Activated CD8-positive, alpha-beta memory T cell treated with anti-CD3 and anti-CD28 coated beads, Interleukin-2, amount 10 ng/mL, durations not matched to agents 7 days and 5 days (primary cell): ENCODE measurements at regions of chr2 and their contacts with region 1.

Region 1: GRCh38 chr2:216114714-216115557 is 5.8 kb downstream of the XRCC5 start:
- DNase-seq: peak; percentile 99
- ATAC-seq: peak; percentile 91
- H3K4me3 Mint-ChIP-seq: peak overlapping the region; percentile 79
- H3K27ac Mint-ChIP-seq: peak overlapping the region; percentile 82
- H3K4me1 Mint-ChIP-seq: peaks cover 90% of the 10 kb centered on the region
- H3K27me3 Mint-ChIP-seq: no peaks in the 10 kb centered on the region

Region 2: DNA sequence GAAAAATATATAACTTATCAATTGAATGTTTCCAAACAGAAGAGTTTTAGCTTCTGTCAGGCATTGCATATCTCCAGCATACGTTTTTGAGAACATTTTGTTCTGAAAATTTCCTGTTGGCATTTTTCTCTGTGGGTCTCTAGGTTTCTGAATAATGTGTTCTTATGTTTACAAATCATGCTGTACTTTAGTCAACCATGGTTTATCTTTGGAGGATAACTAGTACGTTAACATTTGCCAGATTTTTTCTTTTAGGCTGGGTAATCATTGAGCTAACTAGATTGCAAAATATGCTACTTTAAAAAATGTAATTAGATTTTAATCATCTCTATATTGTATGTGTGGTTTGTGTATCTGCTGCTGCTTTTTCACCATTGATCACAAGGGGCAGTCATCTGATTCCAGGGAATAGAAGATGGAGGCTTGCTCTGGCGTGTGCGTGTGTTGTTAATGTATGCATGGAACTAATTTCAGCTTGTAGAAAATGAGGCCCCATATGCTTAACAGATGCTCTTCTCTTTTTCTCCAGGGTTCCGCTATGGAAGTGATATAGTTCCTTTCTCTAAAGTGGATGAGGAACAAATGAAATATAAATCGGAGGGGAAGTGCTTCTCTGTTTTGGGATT is 15.5 kb after region 1 on chr2:
- CTCF ChIA-PET with region 1: interaction called, 13 read pairs
- DNase-seq: no peak
- ATAC-seq: no peak
- H3K4me3 Mint-ChIP-seq: no peak overlapping the region
- H3K27ac Mint-ChIP-seq: no peak overlapping the region
- H3K4me1 Mint-ChIP-seq: peaks cover 51% of the 10 kb centered on the region
- H3K27me3 Mint-ChIP-seq: no peaks in the 10 kb centered on the region

Region 3: GRCh38 chr2:216139884-216140283 is 24.9 kb after region 1 on chr2:
- CTCF ChIA-PET with region 1: interaction called, 21 read pairs
- DNase-seq: peak; percentile 56
- ATAC-seq: peak; percentile 34
- H3K4me3 Mint-ChIP-seq: no peak overlapping the region
- H3K27ac Mint-ChIP-seq: peak overlapping the region; percentile 26
- H3K4me1 Mint-ChIP-seq: peaks cover 53% of the 10 kb centered on the region
- H3K27me3 Mint-ChIP-seq: no peaks in the 10 kb centered on the region

Region 4: DNA sequence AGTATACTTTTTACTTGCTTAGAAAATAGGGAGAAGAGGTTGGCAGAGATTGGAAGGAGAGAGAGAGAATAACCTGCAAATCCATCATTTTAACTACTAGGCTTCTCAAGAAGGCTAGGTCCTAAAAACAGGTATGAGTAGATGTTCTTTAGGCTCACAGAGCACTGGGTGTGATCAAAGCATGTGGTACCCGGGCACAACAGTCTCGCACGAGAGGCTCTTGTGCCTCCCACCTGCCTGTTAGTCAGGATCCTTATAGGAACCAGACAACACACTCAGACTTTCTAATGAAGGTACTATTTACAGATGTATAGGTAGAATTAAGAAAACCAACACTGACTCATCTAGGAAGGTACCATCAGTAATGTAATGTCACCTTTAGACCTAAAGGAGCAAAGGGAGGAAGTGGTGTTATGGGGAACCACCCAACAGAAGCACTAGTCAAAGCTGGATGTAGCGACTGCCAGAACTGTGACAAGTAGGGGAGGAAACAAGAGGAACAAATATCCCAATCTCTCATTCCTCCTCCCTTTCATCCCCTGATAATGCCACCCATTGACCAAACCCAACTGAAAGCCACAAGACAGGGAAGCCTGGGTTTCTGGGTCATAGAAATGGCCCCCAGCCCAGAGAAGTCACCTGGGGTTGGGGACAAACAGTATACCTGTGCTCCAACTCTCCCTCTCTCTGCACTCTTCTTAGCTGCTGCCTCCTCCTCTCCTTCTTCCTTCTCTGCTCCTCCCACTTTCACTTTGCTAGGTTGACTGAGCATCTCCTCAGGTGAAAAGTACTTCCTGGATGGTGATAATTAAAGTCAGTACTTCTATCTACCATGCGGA is 273.3 kb after region 1 on chr2:
- CTCF ChIA-PET with region 1: no interaction called
- DNase-seq: no peak
- ATAC-seq: peak; percentile 82
- H3K4me3 Mint-ChIP-seq: no peak overlapping the region
- H3K27ac Mint-ChIP-seq: peak overlapping the region; percentile 16
- H3K4me1 Mint-ChIP-seq: peaks cover 19% of the 10 kb centered on the region
- H3K27me3 Mint-ChIP-seq: no peaks in the 10 kb centered on the region